ENCODE measurements at regions of chr2 and their contacts with region 1.

Region 1: DNA sequence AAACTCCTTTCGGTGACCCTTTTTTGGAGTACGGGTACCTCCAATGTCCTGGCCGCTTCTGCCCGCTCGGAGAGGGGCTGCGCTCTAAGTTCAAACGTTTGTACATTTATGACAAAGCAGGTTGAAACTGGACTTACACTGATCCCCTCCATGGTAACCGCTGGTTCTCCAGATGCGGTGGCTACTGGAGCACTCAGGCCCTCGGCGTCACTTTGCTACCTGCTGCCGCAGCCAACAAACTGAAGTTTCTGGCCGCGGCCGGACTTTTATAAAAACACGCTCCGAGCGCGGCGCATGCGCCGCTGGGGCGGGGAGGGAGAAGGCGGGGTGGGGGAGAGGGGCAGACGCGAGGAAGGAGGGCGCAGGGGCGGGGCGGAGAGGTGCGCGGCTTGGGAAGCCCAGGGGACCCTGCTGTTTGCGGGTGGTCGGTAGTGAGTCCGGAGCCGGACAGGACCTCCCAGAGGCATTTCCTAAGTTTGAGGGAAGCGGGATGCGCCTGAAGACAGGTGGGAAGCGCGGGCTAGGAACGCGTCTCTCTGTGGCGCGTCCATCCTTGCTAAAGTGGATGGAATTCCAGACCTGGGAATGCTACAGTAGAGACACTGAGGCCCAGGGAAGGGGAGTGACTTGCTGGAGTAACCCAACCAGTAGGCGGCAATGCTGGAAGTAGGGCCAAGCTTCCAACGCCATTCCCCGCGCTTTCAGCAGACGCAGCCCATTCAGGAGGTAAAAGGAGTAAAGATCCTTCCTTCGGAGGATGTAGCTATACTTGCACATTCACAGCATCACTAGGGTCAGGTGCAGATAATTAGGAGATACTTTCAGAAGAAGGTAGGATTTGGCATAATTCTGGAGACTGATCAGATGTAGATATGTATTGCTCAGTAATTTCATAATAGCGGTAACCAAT is at the start of gene CXCR4:
- DNase-seq: no peak
- ATAC-seq: peak; percentile 74
- H3K4me3 ChIP-seq: peak within 1 kb of the TSS; percentile 45 to 51
- H3K27ac ChIP-seq: no peak within 1 kb of the TSS
- H3K4me1 ChIP-seq: peaks cover 4% of the 10 kb centered on the region
- H3K27me3 ChIP-seq: peaks cover 59% of the 10 kb centered on the region
- CTCF ChIP-seq: peak; percentile 44
- total RNA-seq, gene CXCR4: 1.1 TPM

Region 2: GRCh38 chr2:135913727-135914365 is 204.3 kb before region 1 on chr2:
- CTCF ChIA-PET with region 1: no interaction called
- POLR2A ChIA-PET with region 1: no interaction called
- in situ Hi-C with region 1: no loop called
- intact Hi-C with region 1: loop called (anchors 10 kb)
- DNase-seq: peak; percentile 12
- ATAC-seq: no peak
- H3K4me3 ChIP-seq: no peak overlapping the region
- H3K27ac ChIP-seq: no peak overlapping the region
- H3K4me1 ChIP-seq: no peaks in the 10 kb centered on the region
- H3K27me3 ChIP-seq: no peaks in the 10 kb centered on the region
- CTCF ChIP-seq: peak; percentile 79

Region 3: GRCh38 chr2:135985018-135985825 is 132.9 kb before region 1 on chr2 and contains the start of gene DARS1:
- CTCF ChIA-PET with region 1: no interaction called
- POLR2A ChIA-PET with region 1: no interaction called
- in situ Hi-C with region 1: no loop called
- intact Hi-C with region 1: loop called (anchors 10 kb)
- DNase-seq: peak; percentile 69
- ATAC-seq: peak; percentile 98
- H3K4me3 ChIP-seq: peak within 1 kb of the TSS; percentile 91 to 94
- H3K27ac ChIP-seq: peak within 1 kb of the TSS; percentile 97
- H3K4me1 ChIP-seq: peaks cover 15% of the 10 kb centered on the region; the same call in 1 of the 2 replicates
- H3K27me3 ChIP-seq: no peaks in the 10 kb centered on the region
- CTCF ChIP-seq: no peak
- total RNA-seq, gene DARS1: 85.3 TPM